Ovary (tissue), 10 donors: ENCODE measurements at regions of chr5 and their contacts with region 1.

Region 1: GRCh38 chr5:64612344-64612961 is 77.8 kb upstream of the SHISAL2B start:
- DNase-seq: peak in 3 of 5 donors; percentile 17 to 59 (median 37)
- H3K4me3 ChIP-seq: no peak overlapping the region
- H3K27ac ChIP-seq: no peak overlapping the region
- H3K4me1 ChIP-seq: no peaks in the 10 kb centered on the region
- H3K27me3 ChIP-seq: no peaks in the 10 kb centered on the region
- CTCF ChIP-seq: peak; percentile 55 to 58 (median 57)
- EP300 ChIP-seq: no peak
- POLR2A ChIP-seq: no peak

Region 2: GRCh38 chr5:63411936-63412335 is 1200.5 kb before region 1 on chr5:
- intact Hi-C with region 1: no loop called
- DNase-seq: no peak
- H3K4me3 ChIP-seq: no peak overlapping the region
- H3K27ac ChIP-seq: no peak overlapping the region
- H3K4me1 ChIP-seq: no peaks in the 10 kb centered on the region
- H3K27me3 ChIP-seq: no peaks in the 10 kb centered on the region
- CTCF ChIP-seq: no peak
- EP300 ChIP-seq: no peak
- POLR2A ChIP-seq: no peak

Region 3: GRCh38 chr5:64147849-64148441 is 464.5 kb before region 1 on chr5:
- intact Hi-C with region 1: loop called (anchors 5 to 10 kb)
- DNase-seq: peak; percentile 55 to 79 (median 76)
- H3K4me3 ChIP-seq: no peak overlapping the region
- H3K27ac ChIP-seq: no peak overlapping the region
- H3K4me1 ChIP-seq: peaks cover 3% of the 10 kb centered on the region
- H3K27me3 ChIP-seq: no peaks in the 10 kb centered on the region
- CTCF ChIP-seq: peak; percentile 66 to 76 (median 73)
- EP300 ChIP-seq: no peak
- POLR2A ChIP-seq: no peak

Region 4: GRCh38 chr5:64158827-64159226 is 453.6 kb before region 1 on chr5:
- intact Hi-C with region 1: loop called in 2 of 4 experiments (anchors 10 kb)
- DNase-seq: no peak
- H3K4me3 ChIP-seq: no peak overlapping the region
- H3K27ac ChIP-seq: no peak overlapping the region
- H3K4me1 ChIP-seq: no peaks in the 10 kb centered on the region
- H3K27me3 ChIP-seq: no peaks in the 10 kb centered on the region
- CTCF ChIP-seq: no peak
- EP300 ChIP-seq: no peak
- POLR2A ChIP-seq: no peak

Region 5: DNA sequence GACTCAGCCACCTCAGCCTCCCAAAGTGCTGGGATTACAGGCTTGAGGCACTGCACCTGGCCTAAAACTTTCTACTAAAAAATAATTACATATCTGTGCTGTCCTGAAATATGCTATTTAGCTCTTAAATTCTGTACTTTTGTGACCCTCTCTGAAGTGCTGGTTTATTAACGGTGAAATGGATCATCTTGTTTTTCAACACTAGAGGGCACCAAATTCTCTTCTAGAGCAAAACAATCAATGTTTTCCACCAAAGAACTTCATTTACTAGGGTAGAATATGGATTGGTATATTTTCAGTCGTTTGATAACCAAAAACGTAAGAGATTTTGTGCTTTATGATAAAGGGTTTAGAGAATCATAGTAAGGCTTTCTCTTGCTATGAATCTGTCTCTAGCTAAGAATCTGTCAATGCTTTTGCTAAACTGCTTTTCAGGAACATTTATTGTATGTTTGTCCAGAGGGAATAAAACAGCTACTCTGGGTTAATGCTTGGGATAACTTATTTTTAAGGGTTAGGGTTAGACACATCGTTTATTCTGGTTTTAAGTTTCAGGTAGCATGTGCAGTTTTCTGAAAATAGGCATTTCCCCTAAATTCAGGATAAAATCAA is 383.2 kb before region 1 on chr5:
- intact Hi-C with region 1: loop called in 3 of 4 experiments (anchors 5 to 10 kb)
- DNase-seq: no peak
- H3K4me3 ChIP-seq: no peak overlapping the region
- H3K27ac ChIP-seq: no peak overlapping the region
- H3K4me1 ChIP-seq: no peaks in the 10 kb centered on the region
- H3K27me3 ChIP-seq: no peaks in the 10 kb centered on the region
- CTCF ChIP-seq: peak in 2 of 3 donors; percentile 15 to 33
- EP300 ChIP-seq: no peak
- POLR2A ChIP-seq: no peak

Region 6: GRCh38 chr5:64505769-64506566 is 106.5 kb before region 1 on chr5 and contains the start of gene RGS7BP:
- intact Hi-C with region 1: loop called in 1 of 4 experiments (anchors 5 kb)
- DNase-seq: peak; percentile 13 to 69 (median 44)
- H3K4me3 ChIP-seq: peak within 1 kb of the TSS; percentile 38
- H3K27ac ChIP-seq: no peak within 1 kb of the TSS
- H3K4me1 ChIP-seq: peaks cover 1% of the 10 kb centered on the region
- H3K27me3 ChIP-seq: no peaks in the 10 kb centered on the region
- CTCF ChIP-seq: peak in 2 of 3 donors; percentile 6 to 26
- EP300 ChIP-seq: no peak
- POLR2A ChIP-seq: no peak
- total RNA-seq, gene RGS7BP: 1.4 to 6.5 (median 4.3) TPM

Region 7: DNA sequence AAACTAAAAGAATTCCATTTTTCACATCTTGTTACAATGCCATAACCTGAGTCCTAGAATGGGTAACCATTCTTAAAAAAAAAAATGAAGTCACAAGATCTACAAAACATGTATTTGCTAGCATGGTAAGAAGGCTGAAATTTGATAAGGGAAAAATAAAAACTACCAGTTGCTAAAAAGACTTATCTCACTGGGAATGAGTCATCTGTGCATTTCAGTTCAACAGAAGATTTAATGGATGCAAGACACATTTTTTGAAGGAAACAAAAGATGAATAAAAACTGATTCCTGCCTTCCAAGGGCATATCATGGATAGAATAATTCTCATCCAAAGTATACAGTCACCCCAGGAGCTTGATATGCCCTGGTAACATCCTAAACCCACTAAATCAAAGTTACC is 1062.3 kb after region 1 on chr5:
- intact Hi-C with region 1: no loop called
- DNase-seq: no peak
- H3K4me3 ChIP-seq: no peak overlapping the region
- H3K27ac ChIP-seq: no peak overlapping the region
- H3K4me1 ChIP-seq: no peaks in the 10 kb centered on the region
- H3K27me3 ChIP-seq: no peaks in the 10 kb centered on the region
- CTCF ChIP-seq: no peak
- EP300 ChIP-seq: no peak
- POLR2A ChIP-seq: no peak